ENCODE measurements at regions of chr6 and their contacts with region 1.

Region 1: GRCh38 chr6:56843573-56844349 is 111.1 kb upstream of the BEND6 start:
- DNase-seq: peak; percentile 93
- H3K4me3 ChIP-seq: peak overlapping the region; percentile 84
- H3K27ac ChIP-seq: no peak overlapping the region
- H3K4me1 ChIP-seq: no peaks in the 10 kb centered on the region
- H3K27me3 ChIP-seq: no peaks in the 10 kb centered on the region
- CTCF ChIP-seq: peak; percentile 78; the same call in 1 of the 2 replicates

Region 2: DNA sequence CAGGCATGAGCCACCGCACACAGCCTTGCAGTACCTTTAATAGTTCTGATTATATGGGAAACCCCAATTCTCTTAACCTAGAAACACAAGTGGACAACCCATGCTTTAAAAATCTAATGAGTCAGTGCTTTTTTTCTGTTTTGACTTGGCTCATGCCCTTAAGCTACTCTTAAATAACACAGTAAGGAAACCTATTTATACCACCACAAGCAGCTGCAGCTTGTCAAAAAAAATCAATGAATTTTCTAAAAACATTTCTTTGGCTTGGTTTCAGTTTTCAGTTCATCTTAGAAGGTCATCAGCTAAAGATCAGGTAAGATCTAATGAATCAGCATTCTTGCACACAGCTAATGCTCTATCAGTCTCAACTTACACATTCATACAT is 77.0 kb before region 1 on chr6:
- CTCF ChIA-PET with region 1: interaction called, 3 read pairs
- POLR2A ChIA-PET with region 1: no interaction called
- intact Hi-C with region 1: loop called (anchors 5 kb)
- DNase-seq: no peak
- H3K4me3 ChIP-seq: no peak overlapping the region
- H3K27ac ChIP-seq: no peak overlapping the region
- H3K4me1 ChIP-seq: peaks cover 15% of the 10 kb centered on the region
- H3K27me3 ChIP-seq: no peaks in the 10 kb centered on the region
- CTCF ChIP-seq: no peak

Measured in A673 (cell line).